ENCODE measurements at regions of chr2 and their contacts with region 1.

Region 1: DNA sequence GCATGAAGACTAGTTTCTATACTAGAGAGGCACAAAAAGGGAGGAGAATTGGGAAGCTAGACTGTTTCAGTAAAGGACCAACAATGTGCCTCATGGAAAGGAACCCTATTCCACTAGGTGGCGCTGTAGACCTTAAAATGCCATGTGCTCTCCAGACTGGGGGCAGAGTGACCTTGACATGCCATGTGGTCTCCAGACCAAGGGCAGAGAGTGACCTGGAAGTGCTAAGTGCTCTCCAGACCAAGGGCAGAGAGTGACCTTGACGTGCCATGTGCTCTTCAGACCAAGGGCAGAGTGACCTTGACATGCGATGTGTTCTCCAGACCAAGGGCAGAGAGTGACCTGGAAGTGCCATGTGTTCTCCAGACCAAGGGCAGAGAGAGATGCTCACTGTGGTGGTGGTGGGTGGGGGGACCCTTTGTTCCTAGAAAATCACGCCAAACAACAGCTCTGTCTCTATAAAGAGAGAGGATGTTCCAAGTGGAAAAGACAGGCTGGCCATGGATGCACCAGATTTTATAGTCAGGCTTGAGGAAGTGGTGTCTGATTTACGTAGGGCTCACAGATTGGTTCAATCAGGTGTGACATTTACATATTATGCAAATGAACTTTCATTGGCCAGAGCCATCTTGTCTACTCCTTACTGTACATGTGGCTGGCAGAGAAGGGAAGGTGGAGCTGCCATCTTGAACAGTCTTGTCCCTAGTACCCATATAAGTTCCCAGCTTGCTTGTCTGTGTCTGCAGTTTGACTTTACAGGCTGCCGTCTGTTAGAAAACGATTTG is 344.0 kb upstream of the DDX18 start:
- DNase-seq: peak in 1 of 2 experiments; percentile 4
- H3K4me3 ChIP-seq: no peak overlapping the region
- H3K27ac ChIP-seq: no peak overlapping the region
- H3K4me1 ChIP-seq: no peaks in the 10 kb centered on the region
- H3K27me3 ChIP-seq: peaks cover 6% of the 10 kb centered on the region; the same call in 1 of the 2 replicates
- CTCF ChIP-seq: peak; percentile 87

Region 2: GRCh38 chr2:117785740-117786139 is 315.2 kb after region 1 on chr2:
- CTCF ChIA-PET with region 1: no interaction called
- POLR2A ChIA-PET with region 1: no interaction called
- intact Hi-C with region 1: loop called (anchors 2 kb)
- DNase-seq: peak; percentile 17 to 49
- H3K4me3 ChIP-seq: no peak overlapping the region
- H3K27ac ChIP-seq: no peak overlapping the region
- H3K4me1 ChIP-seq: no peaks in the 10 kb centered on the region
- H3K27me3 ChIP-seq: peaks cover 6% of the 10 kb centered on the region; the same call in 1 of the 2 replicates
- CTCF ChIP-seq: peak; percentile 85